Panc1 (cell line): ENCODE measurements at regions of chr9 and their contacts with region 1.

Region 1: GRCh38 chr9:36995927-36996705 is 38.0 kb downstream of the PAX5 start:
- DNase-seq: peak; percentile 63
- ATAC-seq: peak; percentile 92
- H3K4me3 ChIP-seq: peak overlapping the region; percentile 14 to 28; a peak in 3 of 4 replicates
- H3K27ac ChIP-seq: peak overlapping the region; percentile 24; the same call in 1 of the 2 replicates
- H3K4me1 ChIP-seq: peaks cover 4% of the 10 kb centered on the region
- H3K27me3 ChIP-seq: no peaks in the 10 kb centered on the region
- CTCF ChIP-seq: no peak

Region 2: GRCh38 chr9:36855448-36856315 is 140.4 kb before region 1 on chr9:
- CTCF ChIA-PET with region 1: interaction called, 10 read pairs
- POLR2A ChIA-PET with region 1: no interaction called
- in situ Hi-C with region 1: no loop called
- intact Hi-C with region 1: no loop called
- DNase-seq: peak; percentile 8
- ATAC-seq: peak; percentile 93
- H3K4me3 ChIP-seq: no peak overlapping the region
- H3K27ac ChIP-seq: no peak overlapping the region
- H3K4me1 ChIP-seq: 0 out of 2 replicates have a peak, but pooled peaks cover 2% of the 10 kb centered on the region
- H3K27me3 ChIP-seq: peaks cover 9% of the 10 kb centered on the region; the same call in 1 of the 2 replicates
- CTCF ChIP-seq: no peak

Region 3: GRCh38 chr9:37027582-37028419 is 31.7 kb after region 1 on chr9:
- CTCF ChIA-PET with region 1: interaction called, 10 read pairs
- POLR2A ChIA-PET with region 1: no interaction called
- in situ Hi-C with region 1: no loop called
- intact Hi-C with region 1: no loop called
- DNase-seq: peak; percentile 65
- ATAC-seq: peak; percentile 97
- H3K4me3 ChIP-seq: peak overlapping the region; percentile 43 to 54
- H3K27ac ChIP-seq: no peak overlapping the region
- H3K4me1 ChIP-seq: peaks cover 28% of the 10 kb centered on the region
- H3K27me3 ChIP-seq: peaks cover 62% of the 10 kb centered on the region
- CTCF ChIP-seq: no peak

Region 4: GRCh38 chr9:37066139-37066725 is 70.1 kb after region 1 on chr9:
- CTCF ChIA-PET with region 1: no interaction called
- POLR2A ChIA-PET with region 1: no interaction called
- in situ Hi-C with region 1: no loop called
- intact Hi-C with region 1: loop called (anchors 10 kb)
- DNase-seq: no peak
- ATAC-seq: no peak
- H3K4me3 ChIP-seq: no peak overlapping the region
- H3K27ac ChIP-seq: no peak overlapping the region
- H3K4me1 ChIP-seq: no peaks in the 10 kb centered on the region
- H3K27me3 ChIP-seq: peaks cover 30% of the 10 kb centered on the region
- CTCF ChIP-seq: no peak

Region 5: DNA sequence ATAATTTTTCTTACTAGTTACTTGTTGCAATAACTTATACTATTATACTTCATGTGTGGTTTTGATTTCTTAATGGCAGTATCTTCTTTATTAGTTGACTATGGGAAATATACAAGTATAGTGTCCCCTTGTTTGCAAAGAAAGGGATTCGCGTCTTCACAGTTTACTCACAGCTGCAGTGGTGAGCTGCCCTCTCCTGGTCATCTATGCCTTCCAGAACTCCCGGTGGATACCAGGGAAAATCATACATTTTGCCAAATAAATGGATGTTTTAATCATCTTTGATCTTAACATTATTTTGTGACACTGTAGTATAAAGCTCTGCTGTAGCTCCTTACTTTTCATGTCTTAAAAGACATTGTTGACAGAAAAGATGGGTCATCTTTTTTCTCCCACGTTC is 266.3 kb after region 1 on chr9:
- CTCF ChIA-PET with region 1: interaction called, 5 read pairs
- POLR2A ChIA-PET with region 1: no interaction called
- in situ Hi-C with region 1: no loop called
- intact Hi-C with region 1: loop called (anchors 10 kb)
- DNase-seq: no peak
- ATAC-seq: peak; percentile 71; the same call in 1 of the 2 replicates
- H3K4me3 ChIP-seq: no peak overlapping the region
- H3K27ac ChIP-seq: no peak overlapping the region
- H3K4me1 ChIP-seq: no peaks in the 10 kb centered on the region
- H3K27me3 ChIP-seq: no peaks in the 10 kb centered on the region
- CTCF ChIP-seq: peak; percentile 86

Region 6: DNA sequence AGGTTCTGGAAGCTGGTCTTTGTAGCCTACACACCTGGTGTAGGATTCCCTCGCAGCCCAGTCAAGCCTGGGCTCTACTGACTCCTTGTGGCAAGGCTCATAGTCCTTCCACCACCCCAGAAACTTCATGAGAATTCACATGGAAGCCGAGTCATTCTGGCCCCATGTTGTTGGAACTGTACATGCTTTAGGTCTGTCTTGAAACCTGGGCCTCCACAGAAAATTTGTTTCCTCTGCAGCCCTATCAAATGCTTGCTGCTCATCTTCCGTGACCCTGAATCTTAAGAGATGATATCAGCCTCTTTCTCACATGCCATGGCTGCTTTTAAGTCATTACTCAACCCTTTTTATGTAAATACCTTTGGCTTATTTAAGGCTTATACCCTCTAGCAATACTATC is 313.0 kb after region 1 on chr9:
- CTCF ChIA-PET with region 1: no interaction called
- POLR2A ChIA-PET with region 1: no interaction called
- in situ Hi-C with region 1: no loop called
- intact Hi-C with region 1: no loop called
- DNase-seq: no peak
- ATAC-seq: peak; percentile 85
- H3K4me3 ChIP-seq: no peak overlapping the region
- H3K27ac ChIP-seq: no peak overlapping the region
- H3K4me1 ChIP-seq: no peaks in the 10 kb centered on the region
- H3K27me3 ChIP-seq: no peaks in the 10 kb centered on the region
- CTCF ChIP-seq: peak; percentile 76

Region 7: DNA sequence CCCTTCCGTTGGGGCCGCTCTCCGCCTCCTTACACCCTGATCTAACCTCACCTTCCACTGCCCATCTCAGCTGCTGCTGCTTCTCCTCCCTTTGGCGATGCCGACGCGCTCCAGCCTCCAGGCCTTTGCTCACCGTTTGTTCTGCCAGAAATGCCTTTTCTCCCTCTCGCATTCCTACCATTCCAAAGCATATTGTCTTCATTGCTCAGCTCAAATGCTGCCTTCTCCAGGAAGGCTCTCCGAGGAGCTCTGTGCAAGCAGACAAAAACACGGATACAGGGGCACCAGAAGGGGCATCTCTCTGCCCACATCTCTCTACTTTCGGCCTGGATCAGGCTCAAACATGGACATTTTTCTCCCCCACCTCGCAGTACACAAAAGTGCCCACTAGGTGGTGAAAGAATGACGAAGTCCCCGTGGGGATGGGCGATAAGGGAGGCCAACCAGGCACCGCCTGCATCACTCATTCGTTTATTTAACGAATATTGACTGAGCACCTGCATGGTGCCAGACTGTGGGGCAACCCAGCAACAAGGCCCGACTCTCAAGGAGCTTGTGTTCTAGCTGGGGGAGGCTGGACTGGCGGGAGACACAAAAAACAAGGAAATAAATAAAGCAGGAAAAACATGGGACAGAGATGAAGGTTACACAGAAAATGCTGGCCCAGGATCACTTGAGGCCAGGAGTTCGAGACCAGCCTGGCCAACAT is 419.0 kb after region 1 on chr9:
- CTCF ChIA-PET with region 1: interaction called, 13 read pairs
- POLR2A ChIA-PET with region 1: no interaction called
- in situ Hi-C with region 1: no loop called
- intact Hi-C with region 1: loop called (anchors 5 kb)
- DNase-seq: peak; percentile 80
- ATAC-seq: peak; percentile 76
- H3K4me3 ChIP-seq: peak overlapping the region in 1 of 2 experiments; percentile 29; a peak in 2 of 4 replicates
- H3K27ac ChIP-seq: peak overlapping the region; percentile 84
- H3K4me1 ChIP-seq: peaks cover 43% of the 10 kb centered on the region
- H3K27me3 ChIP-seq: no peaks in the 10 kb centered on the region
- CTCF ChIP-seq: no peak